ENCODE measurements at regions of chr1 and their contacts with region 1.

Region 1: GRCh38 chr1:65148548-65149350 is 746 bp downstream of the AK4 start:
- DNase-seq: peak; percentile 88
- ATAC-seq: peak; percentile 78
- H3K4me3 Mint-ChIP-seq: peak overlapping the region; percentile 85
- H3K27ac Mint-ChIP-seq: peak overlapping the region; percentile 82
- H3K4me1 Mint-ChIP-seq: peaks cover 15% of the 10 kb centered on the region
- H3K27me3 Mint-ChIP-seq: peaks cover 43% of the 10 kb centered on the region

Region 2: DNA sequence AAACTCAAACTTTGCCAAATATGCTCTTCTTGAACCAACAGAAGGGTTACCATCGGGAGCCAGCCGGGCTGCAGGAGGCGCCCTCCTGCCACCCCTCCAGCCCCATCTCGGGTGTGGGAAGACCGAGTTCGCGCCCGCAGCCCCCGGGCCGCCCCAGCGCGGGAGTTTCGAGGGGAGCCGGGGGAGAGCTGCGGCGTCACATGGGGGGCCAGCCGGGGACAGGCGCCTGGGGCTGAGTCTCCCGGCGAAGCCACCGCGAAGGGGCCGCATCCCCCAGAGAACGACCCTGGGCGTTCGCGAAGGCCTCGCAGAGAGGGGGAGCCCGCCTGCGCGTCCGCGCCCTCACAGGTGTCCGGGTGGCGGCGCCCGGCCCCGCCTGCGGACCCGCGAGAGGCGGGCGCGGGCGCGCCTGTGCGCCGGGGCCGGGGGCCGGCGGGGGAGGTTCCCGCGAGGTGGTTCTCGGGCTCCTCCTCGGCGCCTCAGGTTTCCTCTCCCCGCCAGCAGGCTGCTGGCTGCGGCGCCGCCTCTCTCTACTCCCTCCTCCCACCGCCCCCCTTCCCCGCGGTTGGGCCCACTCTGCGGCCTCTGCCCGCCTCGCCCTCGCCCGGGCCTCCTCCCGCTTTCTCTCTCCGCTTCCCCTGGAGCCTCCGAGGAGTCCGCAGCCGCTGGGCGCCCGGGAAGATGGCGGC is 404.1 kb before region 1 on chr1 and contains the start of gene RAVER2:
- CTCF ChIA-PET with region 1: no interaction called
- POLR2A ChIA-PET with region 1: no interaction called
- intact Hi-C with region 1: loop called in 1 of 2 experiments (anchors 1 kb)
- DNase-seq: peak; percentile 72
- ATAC-seq: peak; percentile 79
- H3K4me3 Mint-ChIP-seq: peak within 1 kb of the TSS; percentile 76
- H3K27ac Mint-ChIP-seq: peak within 1 kb of the TSS; percentile 70
- H3K4me1 Mint-ChIP-seq: peaks cover 17% of the 10 kb centered on the region
- H3K27me3 Mint-ChIP-seq: peaks cover 5% of the 10 kb centered on the region
- total RNA-seq, gene RAVER2: 3.2 to 3.6 TPM

Region 3: DNA sequence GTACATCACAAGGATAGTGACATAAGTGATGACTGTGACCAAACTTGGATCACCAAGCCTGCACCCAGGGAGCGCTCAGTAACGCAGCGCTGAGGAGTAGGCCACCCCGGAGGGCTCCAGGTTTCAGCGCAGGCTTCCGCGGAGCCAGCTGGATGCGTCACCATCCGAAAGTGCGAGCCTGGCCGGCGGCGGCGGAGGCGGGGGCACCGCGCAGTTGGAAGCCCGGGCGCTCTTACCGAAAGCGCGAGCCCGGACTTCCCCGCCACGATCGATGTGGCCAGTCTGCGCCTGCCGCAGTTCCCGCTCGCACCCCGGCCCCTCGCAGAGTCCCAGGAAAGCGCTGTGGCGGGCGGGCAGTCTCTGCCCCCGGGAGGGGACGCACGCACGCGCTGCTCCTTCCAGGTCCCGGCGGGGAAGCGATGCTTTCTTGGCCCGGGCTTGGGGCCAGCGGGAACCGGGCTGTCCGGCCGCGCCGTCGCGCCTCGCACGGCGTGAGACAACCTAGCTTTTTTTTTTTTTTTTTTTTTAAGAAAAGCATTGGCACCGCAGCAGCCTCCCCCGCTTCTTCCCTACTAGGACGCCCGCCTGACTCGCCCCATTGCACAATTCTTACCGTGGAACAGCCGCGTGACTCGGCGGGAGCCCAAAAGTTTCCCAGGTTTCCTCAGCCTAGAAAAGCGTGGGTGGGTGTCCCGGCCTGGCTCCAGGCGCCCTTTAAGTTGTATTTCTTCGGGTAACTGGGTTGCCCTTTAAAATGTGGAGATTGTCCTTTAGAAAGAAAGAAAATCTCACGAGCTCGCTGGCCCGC is 146.0 kb before region 1 on chr1:
- CTCF ChIA-PET with region 1: no interaction called
- POLR2A ChIA-PET with region 1: no interaction called
- intact Hi-C with region 1: loop called in 1 of 2 experiments (anchors 2 kb)
- DNase-seq: peak; percentile 86
- ATAC-seq: peak; percentile 85
- H3K4me3 Mint-ChIP-seq: peak overlapping the region; percentile 70
- H3K27ac Mint-ChIP-seq: peak overlapping the region; percentile 87
- H3K4me1 Mint-ChIP-seq: peaks cover 28% of the 10 kb centered on the region
- H3K27me3 Mint-ChIP-seq: no peaks in the 10 kb centered on the region

Region 4: DNA sequence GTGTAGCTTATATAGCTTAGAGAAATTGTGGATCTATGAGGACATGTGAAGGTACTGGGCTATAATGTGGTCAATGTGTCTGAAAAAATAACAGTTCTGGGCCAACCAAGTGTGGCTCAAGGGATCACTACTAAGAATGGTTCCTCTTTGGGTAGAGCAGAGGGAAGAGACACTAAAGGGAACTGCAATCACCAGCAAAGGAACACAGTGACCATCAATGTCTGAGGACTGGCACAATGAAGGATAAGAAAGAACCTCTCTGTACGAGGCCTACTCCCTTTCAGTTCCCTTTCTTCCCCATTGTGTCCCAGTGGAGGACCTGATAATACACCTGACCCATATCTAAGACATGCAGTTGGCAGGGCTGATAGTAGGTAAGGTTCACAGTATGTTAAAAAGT is 92.5 kb before region 1 on chr1:
- CTCF ChIA-PET with region 1: no interaction called
- POLR2A ChIA-PET with region 1: no interaction called
- intact Hi-C with region 1: no loop called
- DNase-seq: no peak
- ATAC-seq: no peak
- H3K4me3 Mint-ChIP-seq: no peak overlapping the region
- H3K27ac Mint-ChIP-seq: no peak overlapping the region
- H3K4me1 Mint-ChIP-seq: peaks cover 32% of the 10 kb centered on the region
- H3K27me3 Mint-ChIP-seq: no peaks in the 10 kb centered on the region

Region 5: DNA sequence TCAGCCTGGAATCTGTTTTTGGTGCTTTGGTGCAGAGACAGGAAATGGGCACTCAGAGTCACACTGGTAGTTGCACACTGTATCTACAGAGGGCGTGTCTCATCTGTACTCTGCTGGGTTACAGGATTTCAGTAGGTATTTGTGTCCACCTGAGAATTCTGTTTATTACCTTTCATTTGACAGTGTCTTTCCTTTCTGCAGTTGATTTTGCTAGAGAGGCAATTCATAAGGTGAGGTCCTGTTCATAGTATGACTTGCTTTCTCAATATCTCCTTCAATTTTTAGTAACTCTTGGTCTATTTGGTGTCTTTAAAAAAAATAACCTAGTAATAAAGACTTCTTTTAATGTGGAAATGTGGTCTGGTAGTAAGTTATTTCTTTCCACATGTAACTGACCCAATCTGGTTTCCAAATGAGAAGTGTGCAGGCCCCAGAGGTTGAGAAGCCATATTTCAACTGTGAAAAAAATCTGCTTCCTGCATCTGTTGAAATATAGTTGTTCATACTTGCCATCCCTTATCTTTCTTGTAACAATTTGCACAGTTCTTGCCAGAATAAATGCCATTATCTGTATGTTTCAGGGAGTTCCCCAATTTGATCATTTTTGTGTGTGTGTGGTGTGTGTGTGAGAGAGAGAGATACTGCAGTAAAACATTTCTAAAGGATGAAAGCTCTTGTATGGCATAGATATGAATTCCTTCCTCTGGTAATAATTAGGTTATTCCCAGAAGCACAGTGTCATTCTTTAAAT is 82.2 kb after region 1 on chr1:
- CTCF ChIA-PET with region 1: no interaction called
- POLR2A ChIA-PET with region 1: no interaction called
- intact Hi-C with region 1: no loop called
- DNase-seq: no peak
- ATAC-seq: peak; percentile 84
- H3K4me3 Mint-ChIP-seq: no peak overlapping the region
- H3K27ac Mint-ChIP-seq: no peak overlapping the region
- H3K4me1 Mint-ChIP-seq: peaks cover 23% of the 10 kb centered on the region
- H3K27me3 Mint-ChIP-seq: peaks cover 5% of the 10 kb centered on the region

Region 6: GRCh38 chr1:65254319-65255034 is 105.7 kb after region 1 on chr1:
- CTCF ChIA-PET with region 1: no interaction called
- POLR2A ChIA-PET with region 1: no interaction called
- intact Hi-C with region 1: loop called in 1 of 2 experiments (anchors 1 kb)
- DNase-seq: peak; percentile 93
- ATAC-seq: peak; percentile 96
- H3K4me3 Mint-ChIP-seq: peak overlapping the region; percentile 71
- H3K27ac Mint-ChIP-seq: peak overlapping the region; percentile 39
- H3K4me1 Mint-ChIP-seq: peaks cover 16% of the 10 kb centered on the region
- H3K27me3 Mint-ChIP-seq: peaks cover 16% of the 10 kb centered on the region

Measured in activated CD4-positive, alpha-beta T cell treated with anti-CD3 and anti-CD28 coated beads for 36 hours (primary cell).